Activated T-helper 1 cell treated with anti-CD3 and anti-CD28 coated beads, Interleukin-12 subunit alpha, Interleukin-12 subunit beta, Interleukin-2, Interleukin-4 antibody, amounts not matched to agents 30 ng/mL and 10 ng/mL and 1 ng/mL, durations not matched to agents 14 hours and 24 hours and 36 hours (primary cell): ENCODE measurements at regions of chr22 and their contacts with region 1.

Region 1: DNA sequence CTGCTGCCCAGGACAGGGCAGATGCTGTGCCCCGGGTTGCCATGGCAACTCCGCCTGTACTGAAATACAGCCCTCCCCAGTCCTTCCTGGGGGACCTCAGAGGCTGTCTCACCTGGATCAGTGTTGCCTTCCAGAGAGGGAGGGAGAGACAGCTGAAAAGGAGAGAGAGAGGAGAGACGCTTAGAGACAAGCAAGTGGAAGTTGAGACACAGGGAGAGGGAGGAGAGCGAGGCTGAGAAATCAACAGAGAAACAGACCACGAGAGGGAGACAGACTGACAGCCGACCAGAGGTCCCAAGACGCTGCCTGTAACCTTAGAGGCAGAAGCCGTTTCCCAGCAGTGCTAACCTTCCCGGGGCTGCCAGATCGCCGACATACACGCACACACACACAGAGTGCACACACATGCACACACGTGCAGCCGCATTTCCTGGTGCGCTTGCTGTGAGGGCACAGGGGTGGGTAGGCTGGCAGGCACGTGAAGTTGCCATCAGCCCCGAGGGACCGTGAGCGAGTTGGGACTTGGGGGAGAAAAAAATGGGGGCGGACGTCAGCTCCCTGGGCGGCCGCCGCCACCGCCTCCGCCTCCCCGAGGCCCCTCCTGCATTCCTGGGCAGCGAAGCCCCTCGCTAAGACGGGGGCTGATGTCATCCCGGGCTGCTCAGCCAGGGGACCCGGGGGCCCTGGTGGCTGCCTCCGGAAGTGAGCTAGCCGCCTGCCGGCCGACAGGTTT is 88.6 kb upstream of the CRYBB3 start:
- DNase-seq: peak; percentile 30
- H3K4me3 Mint-ChIP-seq: peak overlapping the region; percentile 82
- H3K27ac Mint-ChIP-seq: peak overlapping the region; percentile 82
- H3K4me1 Mint-ChIP-seq: peaks cover 18% of the 10 kb centered on the region
- H3K27me3 Mint-ChIP-seq: peaks cover 2% of the 10 kb centered on the region

Region 2: GRCh38 chr22:25048659-25049647 is 62.1 kb before region 1 on chr22:
- intact Hi-C with region 1: no loop called
- DNase-seq: peak; percentile 58
- H3K4me3 Mint-ChIP-seq: no peak overlapping the region
- H3K27ac Mint-ChIP-seq: no peak overlapping the region
- H3K4me1 Mint-ChIP-seq: no peaks in the 10 kb centered on the region
- H3K27me3 Mint-ChIP-seq: peaks cover 5% of the 10 kb centered on the region

Region 3: DNA sequence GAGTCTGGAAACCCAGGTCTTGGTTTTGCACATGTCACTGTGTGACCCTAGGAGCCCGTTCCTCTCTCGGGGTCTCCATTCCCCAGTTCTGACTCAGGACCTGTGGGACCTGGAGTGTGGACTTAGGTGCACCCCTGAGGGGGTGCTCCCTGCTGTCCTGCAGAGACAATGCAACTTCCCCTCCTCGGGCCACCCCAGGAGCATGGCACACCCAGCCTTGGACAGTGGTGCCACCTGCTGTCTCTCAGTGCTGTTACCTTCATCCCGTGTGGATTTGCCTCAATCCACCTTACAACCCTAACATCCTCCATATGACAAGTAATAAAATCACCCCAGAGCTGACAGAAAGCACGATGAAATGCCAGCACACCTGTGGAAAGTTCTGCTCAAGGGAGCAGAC is 61.1 kb after region 1 on chr22:
- intact Hi-C with region 1: loop called (anchors 5 kb)
- DNase-seq: no peak
- H3K4me3 Mint-ChIP-seq: no peak overlapping the region
- H3K27ac Mint-ChIP-seq: no peak overlapping the region
- H3K4me1 Mint-ChIP-seq: peaks cover 5% of the 10 kb centered on the region
- H3K27me3 Mint-ChIP-seq: no peaks in the 10 kb centered on the region